ENCODE measurements at regions of chr18 and their contacts with region 1.

Region 1: GRCh38 chr18:36572135-36572856 is 256.5 kb downstream of the TPGS2 start:
- DNase-seq: peak; percentile 50
- H3K4me3 Mint-ChIP-seq: no peak overlapping the region
- H3K27ac Mint-ChIP-seq: no peak overlapping the region
- H3K4me1 Mint-ChIP-seq: no peaks in the 10 kb centered on the region
- H3K27me3 Mint-ChIP-seq: peaks cover 8% of the 10 kb centered on the region

Region 2: DNA sequence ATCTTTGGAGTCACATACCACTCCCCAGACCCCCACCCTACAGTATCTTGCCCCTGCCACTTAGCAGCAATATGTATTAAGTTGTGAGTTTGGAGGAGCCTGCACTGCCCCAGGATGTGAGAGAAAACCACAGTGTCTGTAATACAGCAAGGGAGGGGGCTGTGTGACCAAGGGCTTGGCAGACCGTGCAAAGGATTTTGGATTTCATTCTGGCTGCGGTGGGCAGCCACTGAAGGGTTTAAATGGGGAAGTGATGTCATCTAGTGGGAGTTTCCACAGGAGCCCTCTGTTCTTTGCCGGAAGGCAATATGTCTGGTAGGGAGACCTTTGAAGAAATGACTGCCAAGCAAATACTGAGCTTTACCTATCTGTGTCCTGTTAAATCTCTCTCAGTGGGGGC is 72.4 kb before region 1 on chr18:
- CTCF ChIA-PET with region 1: no interaction called
- intact Hi-C with region 1: loop called (anchors 10 kb)
- DNase-seq: no peak
- H3K4me3 Mint-ChIP-seq: no peak overlapping the region
- H3K27ac Mint-ChIP-seq: no peak overlapping the region
- H3K4me1 Mint-ChIP-seq: no peaks in the 10 kb centered on the region
- H3K27me3 Mint-ChIP-seq: peaks cover 6% of the 10 kb centered on the region

Measured in activated naive CD4-positive, alpha-beta T cell treated with anti-CD3 and anti-CD28 coated beads for 36 hours (primary cell).